IMR-90 (cell line): ENCODE measurements at regions of chr4 and their contacts with region 1.

Region 1: DNA sequence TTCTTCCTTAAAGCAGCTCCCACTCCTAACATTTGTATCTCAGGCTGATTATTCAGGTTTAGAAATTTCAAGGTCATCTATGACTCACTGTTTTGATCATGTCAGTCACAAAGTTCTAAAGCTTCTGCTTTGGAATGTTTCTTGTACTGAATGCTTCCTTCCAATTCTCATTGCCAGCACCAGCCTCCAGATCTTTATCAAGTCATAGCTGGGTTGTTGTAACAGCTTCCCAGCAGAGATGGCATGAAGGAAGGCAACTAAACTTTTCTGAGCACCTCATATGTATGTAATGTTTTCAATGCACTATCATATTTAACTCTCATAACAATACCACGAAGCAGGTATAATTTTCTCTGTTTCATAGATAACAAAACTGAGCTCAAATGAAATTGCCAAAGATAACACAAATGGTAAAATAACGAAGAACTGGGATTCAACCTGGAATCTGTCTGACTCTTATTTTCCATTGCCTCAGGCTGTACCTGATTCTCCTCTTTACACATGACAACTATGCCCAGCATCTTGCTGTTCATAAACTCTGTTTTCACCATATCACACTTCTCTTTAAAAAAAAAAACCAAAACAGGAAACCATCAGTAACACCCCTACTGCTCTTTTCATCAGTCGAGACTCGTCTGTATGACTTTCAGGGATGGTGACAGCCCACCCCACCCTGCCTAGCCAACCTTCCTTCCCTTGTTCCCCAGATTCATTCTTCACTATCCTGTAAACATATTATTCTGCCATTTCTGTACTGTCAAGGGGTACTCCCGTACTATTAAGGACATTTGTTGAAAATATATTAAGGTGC is 13.4 kb downstream of the TRPC3 start:
- DNase-seq: peak; percentile 12
- ATAC-seq: no peak; the same call in 1 of the 2 replicates
- H3K4me3 ChIP-seq: no peak overlapping the region
- H3K27ac ChIP-seq: no peak overlapping the region
- H3K4me1 ChIP-seq: peaks cover 14% of the 10 kb centered on the region
- H3K27me3 ChIP-seq: no peaks in the 10 kb centered on the region
- CTCF ChIP-seq: no peak
- POLR2A ChIP-seq: no peak
- RAD21 ChIP-seq: no peak

Region 2: DNA sequence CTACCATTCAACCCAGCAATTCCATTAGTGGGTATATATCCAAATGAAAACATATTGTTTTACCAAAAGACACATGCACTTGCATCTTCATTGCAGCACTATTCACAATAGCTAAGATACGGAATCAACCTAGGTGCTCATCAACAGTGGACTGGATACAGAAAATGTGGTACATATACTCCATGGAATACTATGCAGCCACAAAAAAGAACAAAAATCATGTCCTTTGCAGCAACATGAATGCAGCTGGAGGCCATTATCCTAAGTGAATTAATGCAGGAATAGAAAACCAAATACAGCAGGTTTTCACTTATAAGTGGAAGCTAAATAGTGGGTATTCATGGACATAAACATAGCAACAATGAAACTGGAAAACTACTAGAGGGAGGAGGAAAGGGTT is 30.1 kb before region 1 on chr4:
- CTCF ChIA-PET with region 1: no interaction called
- POLR2A ChIA-PET with region 1: no interaction called
- dilution Hi-C with region 1: no loop called
- in situ Hi-C with region 1: no loop called
- intact Hi-C with region 1: no loop called
- DNase-seq: no peak
- ATAC-seq: no peak
- H3K4me3 ChIP-seq: no peak overlapping the region
- H3K27ac ChIP-seq: no peak overlapping the region
- H3K4me1 ChIP-seq: no peaks in the 10 kb centered on the region
- H3K27me3 ChIP-seq: no peaks in the 10 kb centered on the region
- CTCF ChIP-seq: no peak
- POLR2A ChIP-seq: no peak
- RAD21 ChIP-seq: no peak

Region 3: GRCh38 chr4:121923306-121923705 is 15.2 kb before region 1 on chr4:
- CTCF ChIA-PET with region 1: no interaction called
- POLR2A ChIA-PET with region 1: interaction called, 18 read pairs
- dilution Hi-C with region 1: no loop called
- in situ Hi-C with region 1: no loop called
- intact Hi-C with region 1: no loop called
- DNase-seq: no peak
- ATAC-seq: no peak
- H3K4me3 ChIP-seq: no peak overlapping the region
- H3K27ac ChIP-seq: no peak overlapping the region
- H3K4me1 ChIP-seq: no peaks in the 10 kb centered on the region
- H3K27me3 ChIP-seq: no peaks in the 10 kb centered on the region
- CTCF ChIP-seq: no peak
- POLR2A ChIP-seq: no peak
- RAD21 ChIP-seq: no peak

Region 4: DNA sequence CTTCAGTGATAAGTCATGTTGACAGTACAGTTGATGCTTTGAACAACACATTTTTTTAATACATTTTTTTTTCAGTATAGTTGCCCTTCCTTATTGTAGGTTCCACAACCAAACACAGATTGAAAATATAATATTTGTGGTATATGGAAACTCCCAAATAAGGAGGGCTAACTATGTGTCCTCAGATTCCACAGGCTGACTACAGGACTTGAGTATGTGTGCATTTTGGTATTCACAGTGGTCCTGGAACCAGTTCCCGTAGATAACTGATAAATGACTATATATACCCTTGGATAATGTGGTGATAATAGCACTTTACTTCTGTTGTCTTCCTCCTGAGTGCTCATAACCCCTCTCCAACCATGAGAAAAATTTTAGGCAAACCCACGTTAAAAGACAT is 1095.5 kb after region 1 on chr4:
- CTCF ChIA-PET with region 1: no interaction called
- POLR2A ChIA-PET with region 1: no interaction called
- dilution Hi-C with region 1: no loop called
- in situ Hi-C with region 1: no loop called
- intact Hi-C with region 1: no loop called
- DNase-seq: peak; percentile 62
- ATAC-seq: peak; percentile 65
- H3K4me3 ChIP-seq: no peak overlapping the region
- H3K27ac ChIP-seq: no peak overlapping the region
- H3K4me1 ChIP-seq: peaks cover 5% of the 10 kb centered on the region
- H3K27me3 ChIP-seq: no peaks in the 10 kb centered on the region
- CTCF ChIP-seq: no peak
- POLR2A ChIP-seq: no peak
- RAD21 ChIP-seq: no peak